Right cardiac atrium (tissue), 5 donors: ENCODE measurements at regions of chr6 and their contacts with region 1.

Region 1: DNA sequence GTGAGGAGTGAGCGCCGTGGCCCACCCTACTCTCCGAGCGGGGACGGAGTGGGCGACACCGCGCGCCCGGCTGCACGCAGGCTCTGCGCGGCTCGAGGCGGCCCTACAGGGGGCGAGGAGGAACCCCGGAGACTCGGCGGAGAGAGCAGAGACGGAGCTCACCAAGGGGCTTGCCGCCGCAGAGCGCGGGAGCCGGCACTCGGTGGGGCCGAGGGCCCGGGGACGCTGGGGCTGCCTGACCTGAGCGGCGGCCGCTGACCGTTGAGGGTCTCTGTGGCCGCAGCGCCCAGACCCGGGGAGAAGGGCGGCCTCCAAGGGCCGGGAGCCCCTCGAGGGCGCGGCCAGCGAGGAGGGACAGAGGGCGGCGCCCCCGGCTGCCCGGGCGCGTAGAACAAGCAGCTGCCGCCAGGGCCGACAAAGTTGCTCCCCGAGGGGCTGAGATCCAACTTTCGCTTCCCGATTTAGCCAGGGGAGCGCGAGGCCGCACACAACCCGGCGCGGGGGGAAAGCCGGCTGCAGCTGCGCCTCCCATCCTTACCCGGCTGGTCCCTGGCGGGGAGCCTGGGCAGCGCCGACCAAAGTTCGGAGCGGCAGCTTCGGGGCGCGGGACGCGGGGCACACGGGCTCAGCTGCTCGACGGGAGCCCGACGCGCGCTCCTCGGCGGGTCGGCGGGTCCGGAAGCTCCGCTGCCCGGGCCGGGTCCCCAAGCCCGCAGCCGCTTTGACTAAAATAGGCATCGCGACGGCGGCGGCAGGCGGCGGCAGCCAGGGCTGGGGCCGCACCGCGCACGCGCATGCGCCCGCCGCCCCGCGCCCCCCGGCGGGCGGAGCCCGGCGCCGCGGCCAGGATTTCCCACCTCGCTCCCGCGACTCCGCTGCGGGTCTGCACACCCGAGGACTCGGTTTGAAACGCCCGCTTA is 43.1 kb downstream of the POPDC3 start:
- DNase-seq: peak; percentile 67 to 86 (median 86)
- ATAC-seq: peak; percentile 88 to 90
- H3K4me3 ChIP-seq: peak overlapping the region; percentile 78
- H3K27ac ChIP-seq: peak overlapping the region; percentile 79
- H3K4me1 ChIP-seq: no peaks in the 10 kb centered on the region
- H3K27me3 ChIP-seq: no peaks in the 10 kb centered on the region

Region 2: GRCh38 chr6:105363100-105363754 is 226.5 kb after region 1 on chr6:
- intact Hi-C with region 1: loop called in 1 of 4 experiments (anchors 10 kb)
- DNase-seq: no peak
- ATAC-seq: no peak
- H3K4me3 ChIP-seq: no peak overlapping the region
- H3K27ac ChIP-seq: no peak overlapping the region
- H3K4me1 ChIP-seq: no peaks in the 10 kb centered on the region
- H3K27me3 ChIP-seq: no peaks in the 10 kb centered on the region